CD8-positive, alpha-beta memory T cell (primary cell): ENCODE measurements at regions of chr2 and their contacts with region 1.

Region 1: GRCh38 chr2:158456309-158457066 is at the starts of genes CCDC148 and PKP4:
- DNase-seq: peak; percentile 82 to 94 (median 90)
- H3K4me3 ChIP-seq: peak within 1 kb of the TSS; percentile 79
- H3K4me3 Mint-ChIP-seq: peak within 1 kb of the TSS; percentile 84 to 96 (median 90)
- H3K27ac ChIP-seq: peak within 1 kb of the TSS; percentile 60
- H3K27ac Mint-ChIP-seq: peak within 1 kb of the TSS; percentile 73 to 97 (median 90)
- H3K4me1 ChIP-seq: peaks cover 14% of the 10 kb centered on the region
- H3K4me1 Mint-ChIP-seq: peaks cover 19 to 26% (median 23%) of the 10 kb centered on the region in 3 donors
- H3K27me3 ChIP-seq: no peaks in the 10 kb centered on the region
- H3K27me3 Mint-ChIP-seq: no peaks in the 10 kb centered on the region
- total RNA-seq, gene CCDC148: 0.40 TPM in 1 of 2 experiments, not detected in the other
- total RNA-seq, gene PKP4: 29.6 to 32.2 TPM

Region 2: DNA sequence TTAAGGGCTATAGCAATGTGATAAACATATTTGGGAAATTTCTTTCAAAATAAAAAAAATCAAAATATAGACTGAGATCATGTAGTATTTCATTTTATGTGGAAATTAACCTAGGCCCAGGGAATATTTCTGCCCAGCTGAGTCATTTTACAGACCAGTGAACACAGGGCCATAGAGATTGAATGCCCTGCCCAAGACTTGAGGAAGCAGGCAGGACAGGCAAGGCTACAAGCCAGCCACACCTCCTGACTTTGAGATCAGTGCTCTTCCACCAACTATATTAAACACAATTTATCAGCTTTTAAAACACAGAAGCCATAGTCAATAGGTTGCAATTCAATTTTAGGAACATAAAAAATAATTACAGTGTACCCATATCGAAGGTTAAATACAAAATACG is 12.9 kb before region 1 on chr2:
- CTCF ChIA-PET with region 1: interaction called, 3 read pairs
- POLR2A ChIA-PET with region 1: interaction called, 11 read pairs
- DNase-seq: no peak
- H3K4me3 ChIP-seq: no peak overlapping the region
- H3K4me3 Mint-ChIP-seq: no peak overlapping the region
- H3K27ac ChIP-seq: no peak overlapping the region
- H3K27ac Mint-ChIP-seq: no peak overlapping the region
- H3K4me1 ChIP-seq: no peaks in the 10 kb centered on the region
- H3K4me1 Mint-ChIP-seq: no peaks in the 10 kb centered on the region
- H3K27me3 ChIP-seq: no peaks in the 10 kb centered on the region
- H3K27me3 Mint-ChIP-seq: peaks cover 0 to 4% of the 10 kb centered on the region in 2 donors